ENCODE measurements at regions of chr18 and their contacts with region 1.

Region 1: GRCh38 chr18:12308386-12309100 is 502 bp downstream of the TUBB6 start:
- DNase-seq: no peak
- H3K4me3 ChIP-seq: peak overlapping the region; percentile 93
- CTCF ChIP-seq: no peak

Region 2: GRCh38 chr18:11987527-11987926 is 321.0 kb before region 1 on chr18:
- CTCF ChIA-PET with region 1: no interaction called
- POLR2A ChIA-PET with region 1: no interaction called
- DNase-seq: no peak
- H3K4me3 ChIP-seq: no peak overlapping the region
- CTCF ChIP-seq: no peak

Region 3: DNA sequence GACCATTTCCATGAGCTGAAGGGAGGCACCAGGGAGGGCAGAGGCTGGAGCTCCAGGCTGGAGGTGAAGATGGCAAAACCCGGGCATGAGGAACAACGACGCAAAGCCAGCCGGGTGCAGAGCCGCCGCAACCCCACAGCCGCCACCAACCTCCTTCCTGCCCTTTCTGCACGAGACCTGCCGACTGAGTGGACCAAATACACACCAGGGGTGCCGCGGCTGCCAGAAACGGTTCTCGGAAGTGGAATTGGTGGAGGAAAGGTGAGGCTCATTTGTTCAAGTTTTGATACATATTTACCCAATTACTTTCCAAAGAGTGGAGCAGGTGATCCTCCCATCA is 62.8 kb before region 1 on chr18:
- CTCF ChIA-PET with region 1: no interaction called
- POLR2A ChIA-PET with region 1: no interaction called
- DNase-seq: no peak
- H3K4me3 ChIP-seq: no peak overlapping the region
- CTCF ChIP-seq: no peak

Region 4: GRCh38 chr18:12287684-12288402 is 20.7 kb before region 1 on chr18:
- CTCF ChIA-PET with region 1: interaction called, 11 read pairs
- POLR2A ChIA-PET with region 1: interaction called, 69 read pairs
- DNase-seq: peak; percentile 87
- H3K4me3 ChIP-seq: peak overlapping the region; percentile 60
- CTCF ChIP-seq: peak; percentile 12

Region 5: GRCh38 chr18:12295901-12296386 is 12.6 kb before region 1 on chr18:
- CTCF ChIA-PET with region 1: interaction called, 18 read pairs
- POLR2A ChIA-PET with region 1: interaction called, 60 read pairs
- DNase-seq: no peak
- H3K4me3 ChIP-seq: no peak overlapping the region
- CTCF ChIP-seq: no peak

Region 6: DNA sequence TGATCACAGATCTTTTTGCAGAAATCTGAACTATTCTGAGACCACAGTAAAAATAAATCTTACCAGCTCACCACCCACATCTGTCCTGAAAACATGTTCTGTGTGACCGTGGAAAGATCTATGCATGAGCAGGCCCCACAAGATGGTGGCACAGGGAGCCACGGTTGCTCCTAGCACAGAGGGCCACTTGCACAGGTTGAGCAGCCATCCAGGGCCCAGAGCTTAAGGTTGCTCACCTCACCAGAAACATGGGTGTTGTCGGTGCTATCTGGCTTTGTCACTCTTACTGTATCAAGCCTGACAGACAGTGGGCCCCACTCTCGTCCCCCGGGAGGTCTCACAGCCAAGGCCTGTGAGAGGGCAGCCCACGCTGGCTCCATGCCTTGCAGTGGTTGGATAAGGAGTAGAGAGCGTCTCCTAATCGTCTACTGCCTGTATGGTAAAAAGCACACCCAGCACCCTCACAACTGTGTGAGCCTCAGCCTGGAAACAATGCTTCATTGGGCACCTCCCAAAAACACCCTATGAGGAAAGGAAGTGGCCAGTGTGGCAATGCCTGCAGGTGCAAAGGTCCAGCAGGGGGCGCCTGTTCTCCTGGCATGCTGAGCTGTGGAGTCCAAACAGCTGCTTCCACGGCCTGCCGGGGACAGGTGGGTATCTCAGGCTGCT is 19.1 kb after region 1 on chr18:
- CTCF ChIA-PET with region 1: interaction called, 79 read pairs
- POLR2A ChIA-PET with region 1: interaction called, 4 read pairs
- DNase-seq: peak; percentile 7
- H3K4me3 ChIP-seq: no peak overlapping the region
- CTCF ChIP-seq: peak; percentile 89

Region 7: GRCh38 chr18:13260197-13260934 is 951.8 kb after region 1 on chr18:
- CTCF ChIA-PET with region 1: no interaction called
- POLR2A ChIA-PET with region 1: no interaction called
- DNase-seq: no peak
- H3K4me3 ChIP-seq: no peak overlapping the region
- CTCF ChIP-seq: no peak

Measured in AG04449 (cell line).